ENCODE measurements at regions of chr3 and their contacts with region 1.

Region 1: GRCh38 chr3:159839561-159840379 is 148.9 kb upstream of the IL12A start:
- DNase-seq: no peak
- H3K4me3 ChIP-seq: no peak within 1 kb of the TSS
- H3K4me3 Mint-ChIP-seq: no peak within 1 kb of the TSS
- H3K27ac Mint-ChIP-seq: no peak within 1 kb of the TSS
- H3K4me1 ChIP-seq: no peaks in the 10 kb centered on the region; the same call in 1 of the 2 replicates
- H3K4me1 Mint-ChIP-seq: no peaks in the 10 kb centered on the region
- H3K27me3 ChIP-seq: no peaks in the 10 kb centered on the region
- H3K27me3 Mint-ChIP-seq: no peaks in the 10 kb centered on the region
- CTCF ChIP-seq: no peak

Region 2: GRCh38 chr3:159586571-159587202 is 253.1 kb before region 1 on chr3:
- CTCF ChIA-PET with region 1: no interaction called
- POLR2A ChIA-PET with region 1: no interaction called
- intact Hi-C with region 1: no loop called
- DNase-seq: peak in 1 of 2 experiments; percentile 54
- H3K4me3 ChIP-seq: no peak overlapping the region
- H3K4me3 Mint-ChIP-seq: no peak overlapping the region
- H3K27ac Mint-ChIP-seq: no peak overlapping the region
- H3K4me1 ChIP-seq: peaks cover 32% of the 10 kb centered on the region
- H3K4me1 Mint-ChIP-seq: peaks cover 18% of the 10 kb centered on the region
- H3K27me3 ChIP-seq: no peaks in the 10 kb centered on the region
- H3K27me3 Mint-ChIP-seq: peaks cover 3% of the 10 kb centered on the region
- CTCF ChIP-seq: peak; percentile 54 to 72

Region 3: DNA sequence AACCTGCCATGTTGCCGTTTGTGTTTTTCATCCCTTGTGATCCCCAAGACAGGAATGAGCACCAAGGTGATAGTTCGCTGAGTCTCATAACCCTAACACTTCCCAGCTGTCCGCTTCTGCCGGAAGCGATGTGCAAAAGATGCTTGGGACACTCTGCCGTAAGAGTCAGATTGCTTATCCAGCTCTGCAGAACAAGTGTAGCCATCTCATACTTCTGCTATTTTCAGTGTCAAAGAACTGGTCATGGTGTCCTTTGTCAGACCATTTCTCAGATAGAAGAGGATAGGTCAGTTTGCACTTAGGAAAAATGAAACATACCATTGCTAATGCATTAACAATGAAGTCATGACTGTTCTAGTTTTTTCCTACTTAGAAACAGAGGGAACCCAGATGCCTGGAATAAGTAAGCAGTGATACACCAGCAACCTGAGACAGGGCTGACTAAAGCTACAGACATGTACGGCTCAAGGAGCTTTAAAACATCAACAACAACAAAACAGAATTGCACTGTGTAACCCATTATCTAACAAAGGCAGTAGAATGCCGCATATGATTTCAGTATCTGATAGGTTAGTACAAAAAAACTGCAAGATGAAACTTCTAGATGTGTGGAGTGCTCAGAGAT is 14.8 kb after region 1 on chr3:
- CTCF ChIA-PET with region 1: no interaction called
- POLR2A ChIA-PET with region 1: no interaction called
- intact Hi-C with region 1: loop called (anchors 2 kb)
- DNase-seq: no peak
- H3K4me3 ChIP-seq: no peak overlapping the region
- H3K4me3 Mint-ChIP-seq: no peak overlapping the region
- H3K27ac Mint-ChIP-seq: no peak overlapping the region
- H3K4me1 ChIP-seq: peaks cover 48% of the 10 kb centered on the region
- H3K4me1 Mint-ChIP-seq: peaks cover 20% of the 10 kb centered on the region
- H3K27me3 ChIP-seq: no peaks in the 10 kb centered on the region
- H3K27me3 Mint-ChIP-seq: no peaks in the 10 kb centered on the region
- CTCF ChIP-seq: no peak

Measured in Caco-2 (cell line).